Panc1 (cell line): ENCODE measurements at regions of chr6 and their contacts with region 1.

Region 1: GRCh38 chr6:21305893-21306332 is 287.6 kb upstream of the SOX4 start:
- DNase-seq: no peak
- ATAC-seq: no peak
- H3K4me3 ChIP-seq: no peak overlapping the region
- H3K27ac ChIP-seq: no peak overlapping the region
- H3K4me1 ChIP-seq: no peaks in the 10 kb centered on the region
- H3K27me3 ChIP-seq: no peaks in the 10 kb centered on the region
- CTCF ChIP-seq: no peak

Region 2: GRCh38 chr6:21263531-21264287 is 42.2 kb before region 1 on chr6:
- CTCF ChIA-PET with region 1: no interaction called
- POLR2A ChIA-PET with region 1: no interaction called
- in situ Hi-C with region 1: no loop called
- intact Hi-C with region 1: no loop called
- DNase-seq: no peak
- ATAC-seq: no peak
- H3K4me3 ChIP-seq: no peak overlapping the region
- H3K27ac ChIP-seq: no peak overlapping the region
- H3K4me1 ChIP-seq: no peaks in the 10 kb centered on the region; the same call in 1 of the 2 replicates
- H3K27me3 ChIP-seq: no peaks in the 10 kb centered on the region
- CTCF ChIP-seq: no peak

Region 3: DNA sequence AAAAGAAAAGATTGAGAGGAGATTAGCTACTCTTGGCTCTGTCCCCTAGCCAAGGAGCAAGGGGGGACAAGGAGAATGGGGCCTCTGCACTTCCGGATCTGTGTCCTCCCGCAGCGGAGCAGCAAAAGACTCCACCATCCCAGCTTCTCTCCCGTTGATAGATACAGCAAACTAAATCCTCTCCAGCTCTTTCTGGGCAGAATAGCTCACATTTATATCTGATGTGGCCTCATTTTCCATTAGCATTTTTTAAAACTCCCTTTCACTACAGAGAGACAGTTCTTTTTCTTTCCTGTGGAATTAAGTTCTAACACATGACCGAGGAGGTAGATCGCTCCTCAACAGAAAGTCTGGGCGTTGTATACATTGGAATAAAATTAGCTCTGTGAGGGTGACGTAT is 26.7 kb after region 1 on chr6:
- CTCF ChIA-PET with region 1: interaction called, 12 read pairs
- POLR2A ChIA-PET with region 1: no interaction called
- in situ Hi-C with region 1: no loop called
- intact Hi-C with region 1: no loop called
- DNase-seq: no peak
- ATAC-seq: no peak
- H3K4me3 ChIP-seq: no peak overlapping the region
- H3K27ac ChIP-seq: no peak overlapping the region
- H3K4me1 ChIP-seq: no peaks in the 10 kb centered on the region; the same call in 1 of the 2 replicates
- H3K27me3 ChIP-seq: no peaks in the 10 kb centered on the region
- CTCF ChIP-seq: no peak